ENCODE measurements at regions of chr4 and their contacts with region 1.

Region 1: GRCh38 chr4:180828440-180829018 is 1414.7 kb upstream of the TENM3 start:
- DNase-seq: peak; percentile 69
- ATAC-seq: peak; percentile 64
- H3K4me3 ChIP-seq: no peak overlapping the region
- H3K27ac ChIP-seq: no peak overlapping the region
- H3K4me1 ChIP-seq: peaks cover 0 to 7% of the 10 kb centered on the region in 2 experiments; a peak in 3 of 4 replicates
- H3K27me3 ChIP-seq: no peaks in the 10 kb centered on the region
- CTCF ChIP-seq: peak; percentile 52 to 82 (median 69)
- POLR2A ChIP-seq: no peak
- RAD21 ChIP-seq: peak; percentile 87

Region 2: DNA sequence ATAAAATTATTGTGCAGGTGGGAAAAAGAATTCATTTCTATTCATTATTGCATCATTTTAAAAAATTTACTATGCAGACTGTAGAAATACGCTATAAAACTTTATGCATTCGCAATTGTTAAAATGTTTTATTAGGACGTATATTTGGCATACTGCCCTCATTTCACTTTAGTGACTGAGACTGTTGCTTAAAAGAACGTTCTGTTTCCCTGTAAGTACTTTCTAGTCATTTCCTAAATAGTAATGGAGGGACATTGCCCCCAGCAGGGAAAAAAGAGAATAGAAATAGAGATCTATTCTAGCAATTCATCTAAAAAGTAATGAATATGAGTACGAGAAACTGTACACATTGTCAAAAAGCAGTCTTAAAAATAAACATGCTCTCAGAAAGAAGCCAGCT is 118.9 kb after region 1 on chr4:
- CTCF ChIA-PET with region 1: no interaction called
- POLR2A ChIA-PET with region 1: no interaction called
- RAD21 ChIA-PET with region 1: no interaction called
- intact Hi-C with region 1: loop called (anchors 1 kb)
- DNase-seq: peak; percentile 16
- ATAC-seq: 0 out of 2 replicates have a peak, but pooled peaks have one; percentile 42
- H3K4me3 ChIP-seq: no peak overlapping the region
- H3K27ac ChIP-seq: no peak overlapping the region
- H3K4me1 ChIP-seq: peaks cover 0 to 13% of the 10 kb centered on the region in 2 experiments; a peak in 2 of 4 replicates
- H3K27me3 ChIP-seq: no peaks in the 10 kb centered on the region
- CTCF ChIP-seq: peak; percentile 29 to 69 (median 57); a peak in 5 of 6 replicates
- POLR2A ChIP-seq: no peak
- RAD21 ChIP-seq: peak; percentile 73

Region 3: GRCh38 chr4:181143250-181143854 is 314.8 kb after region 1 on chr4:
- CTCF ChIA-PET with region 1: interaction called, 7 read pairs
- POLR2A ChIA-PET with region 1: no interaction called
- RAD21 ChIA-PET with region 1: no interaction called
- intact Hi-C with region 1: loop called (anchors 2 kb)
- DNase-seq: peak; percentile 56
- ATAC-seq: peak; percentile 87
- H3K4me3 ChIP-seq: no peak overlapping the region
- H3K27ac ChIP-seq: no peak overlapping the region
- H3K4me1 ChIP-seq: no peaks in the 10 kb centered on the region
- H3K27me3 ChIP-seq: peaks cover 8% of the 10 kb centered on the region; the same call in 1 of the 2 replicates
- CTCF ChIP-seq: peak; percentile 69 to 91 (median 70)
- POLR2A ChIP-seq: no peak
- RAD21 ChIP-seq: peak; percentile 87

Region 4: GRCh38 chr4:181528570-181529184 is 700.1 kb after region 1 on chr4:
- CTCF ChIA-PET with region 1: interaction called, 6 read pairs
- POLR2A ChIA-PET with region 1: no interaction called
- RAD21 ChIA-PET with region 1: no interaction called
- intact Hi-C with region 1: loop called (anchors 1 kb)
- DNase-seq: peak; percentile 54
- ATAC-seq: peak; percentile 96
- H3K4me3 ChIP-seq: no peak overlapping the region
- H3K27ac ChIP-seq: no peak overlapping the region
- H3K4me1 ChIP-seq: no peaks in the 10 kb centered on the region
- H3K27me3 ChIP-seq: peaks cover 26% of the 10 kb centered on the region
- CTCF ChIP-seq: peak; percentile 78 to 92 (median 89)
- POLR2A ChIP-seq: no peak
- RAD21 ChIP-seq: peak; percentile 90

Region 5: DNA sequence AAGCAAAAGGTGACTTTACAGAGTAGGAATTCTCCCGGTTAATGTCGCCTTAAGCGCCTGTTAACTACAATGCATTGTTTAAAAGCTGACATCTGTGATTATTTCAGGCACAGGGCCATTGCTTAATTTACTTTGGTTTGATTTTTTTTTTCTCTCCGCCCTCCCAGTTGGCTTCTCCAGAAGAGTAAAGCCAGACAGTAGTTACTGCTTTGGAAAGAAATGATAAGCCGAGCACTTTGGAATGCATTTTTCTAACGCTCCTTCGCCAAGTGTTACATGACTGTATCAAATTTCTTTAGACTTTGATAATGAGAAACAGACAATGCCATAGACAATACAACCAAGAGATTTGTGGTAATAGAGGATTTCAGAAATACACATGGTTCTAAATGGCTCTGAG is 1031.6 kb after region 1 on chr4:
- CTCF ChIA-PET with region 1: no interaction called
- POLR2A ChIA-PET with region 1: no interaction called
- RAD21 ChIA-PET with region 1: no interaction called
- intact Hi-C with region 1: no loop called
- DNase-seq: no peak
- ATAC-seq: no peak
- H3K4me3 ChIP-seq: no peak overlapping the region
- H3K27ac ChIP-seq: no peak overlapping the region
- H3K4me1 ChIP-seq: no peaks in the 10 kb centered on the region
- H3K27me3 ChIP-seq: peaks cover 7% of the 10 kb centered on the region; the same call in 1 of the 2 replicates
- CTCF ChIP-seq: no peak
- POLR2A ChIP-seq: no peak
- RAD21 ChIP-seq: no peak

Region 6: GRCh38 chr4:182089326-182089725 is 1260.8 kb after region 1 on chr4:
- CTCF ChIA-PET with region 1: no interaction called
- POLR2A ChIA-PET with region 1: no interaction called
- RAD21 ChIA-PET with region 1: no interaction called
- intact Hi-C with region 1: loop called (anchors 5 kb)
- DNase-seq: peak; percentile 2
- ATAC-seq: no peak
- H3K4me3 ChIP-seq: no peak overlapping the region
- H3K27ac ChIP-seq: no peak overlapping the region
- H3K4me1 ChIP-seq: no peaks in the 10 kb centered on the region
- H3K27me3 ChIP-seq: 0 out of 2 replicates have a peak, but pooled peaks cover 3% of the 10 kb centered on the region
- CTCF ChIP-seq: peak; percentile 35 to 67 (median 49); a peak in 5 of 6 replicates
- POLR2A ChIP-seq: no peak
- RAD21 ChIP-seq: peak; percentile 41

Measured in HCT116 (cell line).